ENCODE measurements at regions of chr17 and their contacts with region 1.

Region 1: GRCh38 chr17:45640141-45640850 is 143.8 kb upstream of the CRHR1 start:
- DNase-seq: peak in 2 of 3 donors; percentile 70 to 76
- ATAC-seq: peak; percentile 84
- H3K4me3 ChIP-seq: no peak overlapping the region
- H3K4me1 ChIP-seq: no peaks in the 10 kb centered on the region
- CTCF ChIP-seq: peak; percentile 90

Region 2: DNA sequence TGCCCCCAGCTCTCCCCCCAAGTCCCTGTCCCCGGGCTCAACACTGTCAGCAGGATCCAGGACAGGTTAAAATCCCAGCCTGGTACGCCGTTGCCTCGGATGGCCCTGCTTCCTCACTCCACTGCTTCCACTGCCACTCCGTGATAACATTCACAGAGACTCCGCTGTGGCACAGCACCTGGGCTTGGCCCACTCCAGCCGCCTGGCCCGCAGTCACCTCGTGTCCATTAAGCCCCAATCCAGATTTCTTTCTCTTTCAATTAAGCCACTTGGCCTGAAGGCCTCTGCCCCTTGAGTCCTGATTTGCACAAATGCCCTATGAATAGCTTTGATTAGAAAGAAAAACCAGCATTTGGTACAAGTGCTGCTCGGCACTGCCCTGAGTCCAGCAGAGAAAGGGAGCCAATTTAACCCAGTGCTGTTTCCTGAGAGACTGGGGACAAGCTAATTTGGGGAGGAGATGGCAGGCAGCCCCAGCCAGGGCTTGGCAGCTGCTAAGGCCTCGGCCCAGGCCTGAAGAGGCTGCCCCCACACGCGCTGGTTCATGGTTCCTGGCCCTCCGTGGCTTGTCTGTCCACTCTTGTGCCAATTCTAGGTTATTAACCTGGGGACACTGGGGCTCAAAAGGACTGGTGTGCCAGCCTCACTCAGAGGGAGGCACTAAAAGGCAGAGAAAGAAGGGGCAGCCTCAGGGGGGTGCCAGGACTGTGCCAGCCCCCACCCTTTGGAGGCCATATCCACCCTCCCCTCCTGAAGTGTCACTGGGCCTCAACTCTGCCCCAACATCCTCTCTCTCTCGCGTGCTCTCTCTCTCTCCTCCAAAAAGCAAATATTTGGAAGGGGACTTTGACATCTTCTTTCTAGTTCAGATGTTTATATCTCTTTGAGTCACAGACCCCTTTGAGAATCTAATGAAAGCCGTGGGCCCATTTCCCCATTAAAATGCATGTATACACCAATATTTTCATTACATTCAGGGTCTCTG is 174.6 kb after region 1 on chr17:
- intact Hi-C with region 1: no loop called
- DNase-seq: no peak
- ATAC-seq: no peak
- H3K4me3 ChIP-seq: no peak overlapping the region
- H3K4me1 ChIP-seq: no peaks in the 10 kb centered on the region
- CTCF ChIP-seq: no peak

Region 3: DNA sequence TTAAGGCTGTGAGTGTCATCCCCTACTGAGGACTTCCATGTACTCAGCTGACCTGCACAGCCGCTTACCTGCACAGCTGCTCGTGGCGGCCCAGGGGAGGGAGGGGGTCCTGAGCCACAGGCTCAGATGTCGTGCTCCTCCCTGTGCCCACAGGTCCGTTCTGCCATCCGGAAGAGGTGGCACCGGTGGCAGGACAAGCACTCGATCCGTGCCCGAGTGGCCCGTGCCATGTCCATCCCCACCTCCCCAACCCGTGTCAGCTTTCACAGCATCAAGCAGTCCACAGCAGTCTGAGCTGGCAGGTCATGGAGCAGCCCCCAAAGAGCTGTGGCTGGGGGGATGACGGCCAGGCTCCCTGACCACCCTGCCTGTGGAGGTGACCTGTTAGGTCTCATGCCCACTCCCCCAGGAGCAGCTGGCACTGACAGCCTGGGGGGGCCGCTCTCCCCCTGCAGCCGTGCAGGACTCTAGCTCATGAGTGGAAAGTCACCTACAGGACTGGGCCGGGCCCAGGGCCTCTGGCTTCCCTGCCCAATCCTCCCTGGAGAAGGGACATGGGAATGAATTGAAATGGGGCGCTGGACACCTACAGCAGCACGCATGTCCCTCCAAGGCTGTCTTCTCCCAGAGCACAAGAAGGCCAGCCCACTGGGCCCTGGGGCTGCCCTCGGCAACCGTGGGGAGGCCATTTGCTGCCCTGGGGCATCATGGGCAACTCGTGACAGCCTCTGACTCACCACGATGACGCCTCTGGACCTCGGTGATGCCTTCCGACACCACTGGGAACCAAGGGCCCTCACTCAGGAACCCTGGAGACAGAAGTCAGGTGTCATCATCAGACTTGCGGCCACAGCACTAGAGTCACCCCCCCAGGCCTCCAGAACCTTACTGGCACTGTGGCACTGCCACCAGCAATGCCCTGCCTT is 194.4 kb after region 1 on chr17:
- intact Hi-C with region 1: loop called (anchors 5 kb)
- DNase-seq: no peak
- ATAC-seq: no peak
- H3K4me3 ChIP-seq: no peak overlapping the region
- H3K4me1 ChIP-seq: no peaks in the 10 kb centered on the region
- CTCF ChIP-seq: no peak